ENCODE measurements at regions of chr13 and their contacts with region 1.

Region 1: DNA sequence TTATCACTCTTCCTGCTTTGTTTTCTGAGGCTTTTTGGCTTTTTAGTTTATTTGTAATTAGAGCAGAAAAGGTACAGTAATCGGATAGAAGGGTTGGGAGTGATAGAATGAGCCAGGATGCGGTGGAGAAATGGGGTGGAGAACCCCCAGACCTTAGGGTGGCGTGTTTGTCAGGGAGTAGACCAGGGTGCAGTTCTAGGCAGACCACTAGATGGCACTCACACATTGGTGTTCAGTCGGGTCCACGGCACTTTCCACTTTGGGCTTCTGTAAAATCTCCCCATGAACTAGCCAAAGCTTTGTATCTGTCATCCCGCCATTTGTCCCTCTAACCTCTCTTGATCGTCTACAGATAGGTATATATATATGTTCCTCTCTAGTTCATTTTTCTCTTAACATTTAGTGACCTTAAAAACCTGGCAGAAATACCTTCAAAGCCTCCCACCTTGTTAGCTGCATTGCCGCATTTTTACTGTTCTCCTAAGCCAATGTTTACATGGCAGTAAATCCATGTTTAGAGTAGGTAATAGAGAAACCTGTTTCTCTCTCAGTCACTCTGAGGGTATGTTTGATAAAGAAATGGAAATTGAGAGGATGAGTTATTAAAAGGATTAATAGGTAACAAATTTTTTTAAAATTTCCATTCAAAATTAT is 154.9 kb downstream of the TM9SF2 start:
- DNase-seq: peak; percentile 93
- H3K4me3 Mint-ChIP-seq: peak overlapping the region; percentile 39
- H3K27ac Mint-ChIP-seq: no peak overlapping the region
- H3K4me1 Mint-ChIP-seq: peaks cover 42% of the 10 kb centered on the region
- H3K27me3 Mint-ChIP-seq: no peaks in the 10 kb centered on the region

Region 2: DNA sequence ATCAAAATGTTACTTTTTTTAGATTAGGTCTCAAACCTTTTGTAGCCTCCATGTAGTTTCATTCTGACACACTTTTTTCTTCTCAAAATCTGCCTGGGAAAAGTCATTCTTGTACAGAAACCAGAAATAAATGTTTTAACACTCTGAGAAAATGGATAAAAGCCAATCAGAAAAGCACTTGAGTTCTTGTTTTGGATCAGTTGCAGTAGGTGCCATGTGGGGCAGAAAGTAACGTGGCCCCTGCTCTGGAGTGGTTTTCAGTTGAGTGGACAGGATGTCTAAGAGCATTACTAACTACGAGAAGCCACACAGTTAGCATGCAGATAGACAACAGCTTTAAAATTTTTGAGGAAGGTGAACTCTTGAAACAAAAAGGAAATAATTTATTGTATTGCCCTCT is 368.1 kb before region 1 on chr13:
- CTCF ChIA-PET with region 1: no interaction called
- intact Hi-C with region 1: loop called (anchors 5 kb)
- DNase-seq: peak; percentile 89
- H3K4me3 Mint-ChIP-seq: peak overlapping the region; percentile 37
- H3K27ac Mint-ChIP-seq: peak overlapping the region; percentile 89
- H3K4me1 Mint-ChIP-seq: peaks cover 80% of the 10 kb centered on the region
- H3K27me3 Mint-ChIP-seq: no peaks in the 10 kb centered on the region

Region 3: GRCh38 chr13:99895223-99895994 is 239.2 kb after region 1 on chr13:
- CTCF ChIA-PET with region 1: interaction called, 9 read pairs
- intact Hi-C with region 1: loop called (anchors 1 kb)
- DNase-seq: no peak
- H3K4me3 Mint-ChIP-seq: peak overlapping the region; percentile 48
- H3K27ac Mint-ChIP-seq: no peak overlapping the region
- H3K4me1 Mint-ChIP-seq: peaks cover 3% of the 10 kb centered on the region
- H3K27me3 Mint-ChIP-seq: peaks cover 44% of the 10 kb centered on the region

Region 4: GRCh38 chr13:99980201-99980823 is 324.1 kb after region 1 on chr13:
- CTCF ChIA-PET with region 1: no interaction called
- intact Hi-C with region 1: loop called (anchors 2 kb)
- DNase-seq: peak; percentile 62
- H3K4me3 Mint-ChIP-seq: peak overlapping the region; percentile 15
- H3K27ac Mint-ChIP-seq: no peak overlapping the region
- H3K4me1 Mint-ChIP-seq: peaks cover 23% of the 10 kb centered on the region
- H3K27me3 Mint-ChIP-seq: peaks cover 69% of the 10 kb centered on the region

Region 5: DNA sequence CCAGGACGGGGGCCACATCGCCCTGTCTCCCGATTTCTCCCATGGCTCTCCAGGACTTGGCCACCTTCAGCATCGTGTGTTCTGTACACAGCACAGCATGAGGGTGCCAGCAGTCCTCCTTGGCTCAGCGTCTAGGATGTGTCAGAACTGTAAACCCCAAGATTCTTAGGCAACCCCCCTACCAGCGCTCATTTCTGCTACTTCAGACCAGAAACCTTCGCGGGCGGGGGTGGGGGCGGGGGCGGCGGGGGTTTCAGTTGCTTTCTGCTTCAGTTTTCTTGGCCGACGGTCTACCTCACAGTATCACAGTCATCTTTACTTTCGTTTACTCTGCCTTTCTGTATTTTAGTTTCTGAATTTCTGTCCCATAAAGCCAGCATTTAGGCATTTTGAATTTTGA is 849.9 kb after region 1 on chr13:
- CTCF ChIA-PET with region 1: no interaction called
- intact Hi-C with region 1: loop called (anchors 2 kb)
- DNase-seq: peak; percentile 59
- H3K4me3 Mint-ChIP-seq: peak overlapping the region; percentile 4
- H3K27ac Mint-ChIP-seq: no peak overlapping the region
- H3K4me1 Mint-ChIP-seq: peaks cover 14% of the 10 kb centered on the region
- H3K27me3 Mint-ChIP-seq: peaks cover 8% of the 10 kb centered on the region

Region 6: DNA sequence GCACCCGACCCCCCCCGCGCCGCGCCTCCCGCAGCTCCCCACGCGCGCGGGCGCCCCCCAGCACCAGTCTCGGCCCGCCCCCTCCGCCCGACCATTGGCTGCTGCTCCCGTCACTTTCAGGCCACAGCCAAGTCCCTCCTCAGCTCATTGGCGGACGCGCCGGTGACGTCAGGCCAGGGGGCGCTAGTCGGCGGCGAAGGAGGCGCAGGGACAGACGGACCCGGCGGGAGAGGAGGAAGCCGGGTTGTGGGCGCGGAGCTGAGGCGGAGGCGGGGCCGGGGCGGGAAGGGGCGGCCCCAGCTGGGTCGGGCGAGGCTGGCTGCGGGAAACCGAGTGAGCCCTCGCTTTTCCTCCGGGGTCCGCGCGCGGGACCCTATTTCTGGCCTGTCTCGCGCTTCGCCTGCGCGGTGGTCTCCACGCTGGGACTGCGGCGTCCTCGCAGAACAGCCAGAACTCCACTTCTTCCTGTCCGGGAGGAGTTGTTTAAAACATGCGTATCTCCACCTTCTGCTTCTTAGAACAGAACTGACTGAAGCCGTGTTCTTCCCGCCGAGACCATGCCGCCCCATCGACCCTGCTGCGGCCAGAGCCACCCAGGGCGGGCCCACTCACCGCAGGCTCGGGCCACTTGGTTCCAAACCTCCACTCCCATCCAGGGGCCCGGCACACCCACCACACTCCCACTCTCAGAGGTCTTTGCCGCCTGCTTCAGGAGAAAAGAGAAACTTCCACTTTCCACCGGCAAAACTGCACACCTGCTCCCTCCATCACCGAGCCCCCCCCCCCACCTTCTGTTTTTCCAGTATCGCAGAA is 1018.8 kb after region 1 on chr13:
- CTCF ChIA-PET with region 1: no interaction called
- intact Hi-C with region 1: loop called (anchors 2 kb)
- DNase-seq: peak; percentile 99
- H3K4me3 Mint-ChIP-seq: peak overlapping the region; percentile 76
- H3K27ac Mint-ChIP-seq: peak overlapping the region; percentile 20
- H3K4me1 Mint-ChIP-seq: peaks cover 20% of the 10 kb centered on the region
- H3K27me3 Mint-ChIP-seq: no peaks in the 10 kb centered on the region

Measured in activated naive CD4-positive, alpha-beta T cell treated with anti-CD3 and anti-CD28 coated beads for 36 hours (primary cell).